ENCODE measurements at regions of chr3 and their contacts with region 1.

Region 1: DNA sequence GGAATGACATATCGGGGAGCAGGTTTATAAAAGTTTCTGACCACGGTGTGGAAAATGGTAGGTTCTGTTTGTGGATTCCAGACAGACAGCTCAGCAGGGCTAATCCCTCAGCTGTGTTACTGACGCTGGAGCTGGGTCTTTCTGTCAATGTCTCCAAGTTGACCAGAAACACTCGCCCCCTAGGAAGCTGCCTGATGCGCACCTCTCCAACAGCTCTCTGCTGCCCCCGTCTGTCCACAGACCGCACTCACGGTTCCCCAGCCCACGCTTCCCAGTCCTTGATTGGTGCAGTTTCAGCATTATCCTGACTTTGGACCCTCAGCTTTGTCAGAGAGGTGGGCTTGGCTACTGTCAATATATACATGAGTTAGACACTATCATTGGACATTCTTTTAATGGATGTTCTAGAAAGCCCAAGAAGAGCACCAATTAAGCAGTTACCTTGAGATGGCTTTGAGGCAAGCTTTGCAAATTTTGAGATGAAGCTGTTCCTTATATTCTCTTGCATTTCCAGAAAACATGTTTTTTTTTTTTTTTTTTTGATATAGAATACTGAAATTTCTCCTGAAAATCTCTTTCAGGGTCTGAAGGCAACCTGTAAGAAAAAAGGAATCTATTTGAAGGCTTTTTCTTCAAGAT is 98.9 kb upstream of the TBC1D5 start:
- DNase-seq: no peak
- H3K4me3 ChIP-seq: no peak overlapping the region
- CTCF ChIP-seq: peak; percentile 97

Region 2: DNA sequence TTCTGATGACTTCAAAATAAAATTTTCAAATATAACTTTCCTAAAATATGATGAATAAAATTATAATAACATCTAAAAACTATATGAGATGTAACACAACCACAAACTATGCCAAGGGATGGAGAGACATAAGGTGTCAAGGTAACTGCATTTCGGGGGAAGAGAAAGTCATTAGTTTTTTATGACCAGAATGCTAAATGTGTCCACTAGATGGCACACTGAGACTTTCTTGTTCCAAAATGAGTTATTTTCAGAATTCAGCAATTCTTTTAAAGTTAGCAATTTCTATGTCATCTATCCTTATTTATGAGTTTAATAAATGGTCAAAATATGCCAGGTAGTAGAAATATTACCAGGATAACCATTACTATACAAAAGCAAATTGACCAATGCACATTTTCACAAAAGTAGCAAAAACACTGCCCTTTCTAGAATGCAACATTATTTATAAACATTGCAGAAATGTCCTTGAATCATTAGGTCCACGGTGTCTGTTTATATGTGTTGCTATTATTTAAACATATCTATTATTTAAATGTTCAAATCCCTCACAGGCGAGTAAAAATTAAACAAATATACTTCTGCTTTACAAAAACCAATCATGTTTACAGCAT is 582.4 kb before region 1 on chr3:
- CTCF ChIA-PET with region 1: interaction called, 11 read pairs
- POLR2A ChIA-PET with region 1: no interaction called
- DNase-seq: peak; percentile 7
- H3K4me3 ChIP-seq: no peak overlapping the region
- CTCF ChIP-seq: peak; percentile 57

Region 3: DNA sequence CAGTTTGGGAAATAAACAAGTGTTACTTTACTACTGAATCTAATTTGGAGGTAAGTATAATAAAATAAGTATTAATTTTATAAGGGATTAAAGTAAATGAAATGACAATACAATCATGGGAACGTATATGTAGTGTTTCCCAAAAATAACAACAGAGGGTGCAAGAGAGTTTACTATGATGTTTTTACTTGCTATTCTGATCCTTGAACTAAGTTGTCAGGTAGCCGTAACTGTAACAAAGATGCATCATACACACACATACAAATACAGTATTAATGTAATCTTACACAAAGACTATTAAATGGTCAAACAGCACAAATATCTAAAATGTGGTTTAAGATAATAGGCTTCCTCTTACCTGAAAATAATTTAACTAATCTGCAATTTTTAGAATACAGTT is 410.3 kb before region 1 on chr3:
- CTCF ChIA-PET with region 1: interaction called, 103 read pairs
- POLR2A ChIA-PET with region 1: no interaction called
- DNase-seq: no peak
- H3K4me3 ChIP-seq: no peak overlapping the region
- CTCF ChIP-seq: peak; percentile 33

Region 4: DNA sequence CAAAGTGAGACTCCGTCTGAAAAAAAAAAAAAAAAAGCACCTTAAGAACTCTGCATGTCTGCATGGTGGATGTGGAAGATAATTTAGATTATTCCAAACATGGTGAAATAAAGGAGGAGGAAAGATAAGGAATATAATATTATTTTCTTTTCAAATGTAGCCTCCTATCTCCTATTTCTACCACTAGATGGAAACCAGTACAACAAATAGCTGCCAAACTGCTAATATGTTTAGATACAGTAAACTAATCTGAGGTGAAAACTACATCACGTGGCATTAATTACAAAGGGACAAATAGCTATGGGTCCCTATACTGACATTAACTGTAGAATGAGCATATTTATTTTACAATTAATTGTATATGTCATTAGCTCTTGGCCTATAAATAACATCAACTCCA is 296.7 kb before region 1 on chr3:
- CTCF ChIA-PET with region 1: interaction called, 22 read pairs
- POLR2A ChIA-PET with region 1: no interaction called
- DNase-seq: no peak
- H3K4me3 ChIP-seq: no peak overlapping the region
- CTCF ChIP-seq: no peak

Region 5: GRCh38 chr3:17742108-17742879 is 99.0 kb before region 1 on chr3 and contains the start of gene TBC1D5:
- CTCF ChIA-PET with region 1: interaction called, 13 read pairs
- POLR2A ChIA-PET with region 1: interaction called, 4 read pairs
- DNase-seq: peak; percentile 81
- H3K4me3 ChIP-seq: peak within 1 kb of the TSS; percentile 76
- CTCF ChIP-seq: peak; percentile 2

Region 6: GRCh38 chr3:17820704-17821103 is 20.6 kb before region 1 on chr3:
- CTCF ChIA-PET with region 1: interaction called, 22 read pairs
- POLR2A ChIA-PET with region 1: no interaction called
- DNase-seq: no peak
- H3K4me3 ChIP-seq: no peak overlapping the region
- CTCF ChIP-seq: no peak

Region 7: GRCh38 chr3:17931131-17931530 is 89.8 kb after region 1 on chr3:
- CTCF ChIA-PET with region 1: no interaction called
- POLR2A ChIA-PET with region 1: no interaction called
- DNase-seq: no peak
- H3K4me3 ChIP-seq: no peak overlapping the region
- CTCF ChIP-seq: no peak

Region 8: GRCh38 chr3:17964108-17964507 is 122.8 kb after region 1 on chr3:
- CTCF ChIA-PET with region 1: no interaction called
- POLR2A ChIA-PET with region 1: no interaction called
- DNase-seq: no peak
- H3K4me3 ChIP-seq: no peak overlapping the region
- CTCF ChIP-seq: no peak

Measured in AG04449 (cell line).